ENCODE measurements at regions of chr1 and their contacts with region 1.

Region 1: DNA sequence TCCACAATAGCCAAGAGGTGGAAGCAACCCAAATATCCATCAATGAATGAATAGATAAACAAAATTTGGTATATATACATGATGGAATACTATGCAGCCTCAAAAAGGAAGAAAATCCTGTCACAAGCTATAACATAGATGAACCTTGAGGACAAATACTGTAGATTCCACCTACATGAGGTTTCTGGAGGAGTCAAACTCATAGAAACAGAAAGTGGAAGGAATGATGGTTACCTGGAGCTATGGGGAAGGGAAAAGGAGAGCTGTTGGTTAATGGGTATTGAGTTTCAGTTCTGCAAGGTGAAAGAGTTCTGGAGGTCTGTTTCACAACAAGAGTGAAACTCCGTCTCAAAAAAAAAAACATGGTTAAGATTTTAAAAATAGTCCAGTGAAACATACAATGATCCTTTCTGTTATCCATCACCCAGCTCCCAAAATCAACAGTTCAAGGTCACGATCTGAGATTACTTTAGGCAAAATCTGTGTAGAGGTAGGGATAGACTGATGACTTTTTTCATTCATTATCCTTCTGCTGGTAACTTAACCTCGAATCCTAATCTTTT is 80.8 kb upstream of the HNRNPU start:
- DNase-seq: no peak
- ATAC-seq: no peak
- H3K4me3 ChIP-seq: no peak overlapping the region
- H3K4me3 Mint-ChIP-seq: no peak overlapping the region
- H3K27ac ChIP-seq: no peak overlapping the region
- H3K27ac Mint-ChIP-seq: no peak overlapping the region
- H3K4me1 ChIP-seq: no peaks in the 10 kb centered on the region
- H3K4me1 Mint-ChIP-seq: no peaks in the 10 kb centered on the region
- H3K27me3 ChIP-seq: no peaks in the 10 kb centered on the region
- H3K27me3 Mint-ChIP-seq: no peaks in the 10 kb centered on the region
- CTCF ChIP-seq: no peak

Region 2: DNA sequence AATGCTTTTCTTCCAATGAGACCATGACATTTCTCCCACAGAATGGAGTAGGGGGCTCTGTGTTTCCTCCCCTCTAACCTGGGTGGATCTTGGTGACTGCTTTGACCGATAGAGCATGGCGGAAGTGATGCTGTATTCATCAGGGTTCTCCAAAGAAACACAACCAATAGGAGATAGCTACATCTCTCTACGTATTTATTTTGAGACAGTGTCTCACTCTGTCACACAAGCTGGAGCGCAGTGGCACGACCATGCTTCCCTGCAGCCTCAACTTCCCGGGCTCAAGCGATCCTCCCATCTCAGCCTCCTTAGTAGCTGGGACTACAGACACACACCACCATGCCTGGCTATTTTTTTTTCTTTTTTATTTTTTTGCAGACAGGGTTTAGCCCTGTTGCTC is 51.4 kb before region 1 on chr1:
- CTCF ChIA-PET with region 1: no interaction called
- POLR2A ChIA-PET with region 1: no interaction called
- intact Hi-C with region 1: loop called in 1 of 2 experiments (anchors 5 kb)
- DNase-seq: no peak
- ATAC-seq: no peak
- H3K4me3 ChIP-seq: no peak overlapping the region
- H3K4me3 Mint-ChIP-seq: no peak overlapping the region
- H3K27ac ChIP-seq: no peak overlapping the region
- H3K27ac Mint-ChIP-seq: no peak overlapping the region
- H3K4me1 ChIP-seq: no peaks in the 10 kb centered on the region
- H3K4me1 Mint-ChIP-seq: no peaks in the 10 kb centered on the region
- H3K27me3 ChIP-seq: no peaks in the 10 kb centered on the region
- H3K27me3 Mint-ChIP-seq: no peaks in the 10 kb centered on the region
- CTCF ChIP-seq: no peak